RWPE1 (cell line): ENCODE measurements at regions of chr3 and their contacts with region 1.

Region 1: GRCh38 chr3:98602078-98602678 is 8.8 kb upstream of the CPOX start:
- DNase-seq: peak; percentile 45
- H3K27ac ChIP-seq: no peak overlapping the region
- CTCF ChIP-seq: peak; percentile 87

Region 2: GRCh38 chr3:98994128-98994762 is 392.1 kb after region 1 on chr3:
- CTCF ChIA-PET with region 1: interaction called, 15 read pairs
- POLR2A ChIA-PET with region 1: no interaction called
- DNase-seq: peak; percentile 43
- H3K27ac ChIP-seq: no peak overlapping the region
- CTCF ChIP-seq: peak; percentile 74